ENCODE measurements at regions of chr6 and their contacts with region 1.

Region 1: GRCh38 chr6:27795697-27796494 is 116.3 kb downstream of the OR2B2 start:
- DNase-seq: peak; percentile 89
- ATAC-seq: peak; percentile 59
- H3K4me3 ChIP-seq: no peak overlapping the region
- H3K4me3 Mint-ChIP-seq: no peak overlapping the region
- H3K27ac ChIP-seq: no peak overlapping the region
- H3K27ac Mint-ChIP-seq: peak overlapping the region; percentile 17
- H3K4me1 ChIP-seq: peaks cover 19 to 25% of the 10 kb centered on the region in 2 donors
- H3K4me1 Mint-ChIP-seq: peaks cover 22% of the 10 kb centered on the region
- H3K27me3 ChIP-seq: peaks cover 0 to 10% (median 5%) of the 10 kb centered on the region in 4 experiments
- H3K27me3 Mint-ChIP-seq: peaks cover 12% of the 10 kb centered on the region
- CTCF ChIP-seq: peak; percentile 84

Region 2: DNA sequence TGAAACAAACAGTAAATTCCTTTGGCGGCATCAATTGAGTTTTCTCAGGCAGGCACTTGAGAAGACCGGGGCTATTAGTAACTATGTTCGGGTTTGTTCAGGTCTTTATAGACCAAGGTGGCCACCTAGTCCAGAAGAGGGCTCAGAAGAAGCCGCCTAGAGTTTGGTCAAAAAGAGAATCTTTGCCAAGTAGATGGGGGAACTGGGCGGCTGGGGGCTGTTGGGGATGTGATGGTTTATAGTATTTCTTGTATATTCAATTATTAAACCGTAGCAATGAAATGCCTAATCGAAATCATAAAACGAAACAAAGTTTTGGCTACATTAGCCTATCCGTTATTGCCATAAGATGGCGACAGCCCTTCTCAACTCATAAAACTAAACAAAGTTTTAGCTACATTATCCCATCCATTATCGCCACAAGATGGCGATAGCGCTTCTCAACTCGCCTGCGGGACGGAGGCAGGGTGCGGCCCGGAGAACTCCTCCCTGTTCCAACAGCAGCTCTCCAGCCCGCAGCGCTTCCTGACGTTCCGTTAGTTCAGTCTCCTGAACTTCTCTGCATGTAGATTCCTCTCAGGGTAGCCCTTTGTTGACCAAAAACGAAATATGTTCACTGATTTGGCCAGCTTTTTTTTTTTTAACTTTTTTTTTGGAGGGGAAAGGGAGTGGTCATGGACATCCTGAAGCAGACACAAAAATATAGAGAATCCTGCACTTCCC is 668.9 kb before region 1 on chr6:
- CTCF ChIA-PET with region 1: interaction called, 20 read pairs
- POLR2A ChIA-PET with region 1: no interaction called
- intact Hi-C with region 1: no loop called
- DNase-seq: peak; percentile 93
- ATAC-seq: peak; percentile 76
- H3K4me3 ChIP-seq: peak overlapping the region; percentile 5 to 56 (median 40)
- H3K4me3 Mint-ChIP-seq: peak overlapping the region; percentile 87
- H3K27ac ChIP-seq: peak overlapping the region in 1 of 2 donors; percentile 56
- H3K27ac Mint-ChIP-seq: peak overlapping the region; percentile 85
- H3K4me1 ChIP-seq: peaks cover 13 to 18% of the 10 kb centered on the region in 2 donors
- H3K4me1 Mint-ChIP-seq: peaks cover 20% of the 10 kb centered on the region
- H3K27me3 ChIP-seq: no peaks in the 10 kb centered on the region
- H3K27me3 Mint-ChIP-seq: no peaks in the 10 kb centered on the region
- CTCF ChIP-seq: peak; percentile 92

Region 3: DNA sequence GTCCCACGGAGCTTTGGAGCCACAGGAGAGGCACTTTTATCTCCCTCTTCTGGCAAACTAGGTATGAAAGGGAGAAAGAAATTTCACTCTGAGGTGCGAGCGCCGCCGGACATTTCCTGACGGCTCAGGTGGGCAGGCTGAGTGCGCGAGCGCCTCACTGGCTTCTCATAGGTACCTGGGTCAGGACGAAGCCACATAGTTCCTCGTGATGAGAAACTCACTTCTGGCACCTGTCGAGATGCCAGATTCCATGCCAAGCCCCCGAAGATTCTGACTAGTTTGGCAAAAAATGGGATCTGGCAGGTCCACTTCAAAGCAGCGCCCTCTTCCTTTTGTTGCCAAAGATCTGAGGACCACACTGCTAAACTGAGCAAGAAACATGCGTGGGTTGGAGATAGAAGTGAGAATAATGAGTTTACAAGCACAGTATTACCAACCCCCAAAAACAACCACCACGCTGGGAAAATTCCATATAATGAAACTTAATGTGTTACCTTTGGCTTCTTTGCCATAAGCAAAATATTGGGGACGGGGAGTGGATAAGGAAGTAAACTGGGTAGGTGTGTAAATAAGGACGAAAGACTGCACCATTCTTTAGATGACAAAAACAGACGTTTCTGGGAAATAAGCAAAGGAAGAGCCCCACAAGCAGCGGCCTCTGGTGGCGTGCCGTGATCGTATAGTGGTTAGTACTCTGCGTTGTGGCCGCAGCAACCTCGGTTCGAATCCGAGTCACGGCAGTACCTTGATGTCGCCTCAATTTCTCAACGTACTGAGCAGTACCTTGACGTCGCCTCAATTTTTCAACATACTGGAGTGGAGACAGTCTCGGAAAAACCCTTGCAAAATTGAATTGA is 638.2 kb before region 1 on chr6:
- CTCF ChIA-PET with region 1: interaction called, 8 read pairs
- POLR2A ChIA-PET with region 1: no interaction called
- intact Hi-C with region 1: loop called (anchors 1 kb)
- DNase-seq: peak; percentile 91
- ATAC-seq: peak; percentile 77
- H3K4me3 ChIP-seq: peak overlapping the region; percentile 59 to 91 (median 72)
- H3K4me3 Mint-ChIP-seq: peak overlapping the region; percentile 94
- H3K27ac ChIP-seq: peak overlapping the region; percentile 18 to 45
- H3K27ac Mint-ChIP-seq: peak overlapping the region; percentile 85
- H3K4me1 ChIP-seq: peaks cover 17 to 20% of the 10 kb centered on the region in 2 donors
- H3K4me1 Mint-ChIP-seq: peaks cover 25% of the 10 kb centered on the region
- H3K27me3 ChIP-seq: no peaks in the 10 kb centered on the region
- H3K27me3 Mint-ChIP-seq: no peaks in the 10 kb centered on the region
- CTCF ChIP-seq: peak; percentile 64

Region 4: GRCh38 chr6:27312146-27312949 is 483.5 kb before region 1 on chr6 and contains the start of gene POM121L2:
- CTCF ChIA-PET with region 1: interaction called, 10 read pairs
- POLR2A ChIA-PET with region 1: no interaction called
- intact Hi-C with region 1: no loop called
- DNase-seq: peak; percentile 82
- ATAC-seq: peak; percentile 60
- H3K4me3 ChIP-seq: peak within 1 kb of the TSS; percentile 5 to 69 (median 62)
- H3K4me3 Mint-ChIP-seq: peak within 1 kb of the TSS; percentile 88
- H3K27ac ChIP-seq: no peak within 1 kb of the TSS
- H3K27ac Mint-ChIP-seq: no peak within 1 kb of the TSS
- H3K4me1 ChIP-seq: peaks cover 12 to 13% of the 10 kb centered on the region in 2 donors
- H3K4me1 Mint-ChIP-seq: peaks cover 13% of the 10 kb centered on the region
- H3K27me3 ChIP-seq: peaks cover 0 to 56% (median 38%) of the 10 kb centered on the region in 4 experiments
- H3K27me3 Mint-ChIP-seq: peaks cover 70% of the 10 kb centered on the region
- CTCF ChIP-seq: peak; percentile 82
- total RNA-seq, gene POM121L2: not detected in 2 replicates

Region 5: GRCh38 chr6:27518881-27519795 is 276.8 kb before region 1 on chr6:
- CTCF ChIA-PET with region 1: interaction called, 15 read pairs
- POLR2A ChIA-PET with region 1: no interaction called
- intact Hi-C with region 1: no loop called
- DNase-seq: peak; percentile 87
- ATAC-seq: peak; percentile 67
- H3K4me3 ChIP-seq: peak overlapping the region; percentile 67 to 89 (median 76)
- H3K4me3 Mint-ChIP-seq: peak overlapping the region; percentile 85
- H3K27ac ChIP-seq: peak overlapping the region; percentile 52 to 69
- H3K27ac Mint-ChIP-seq: peak overlapping the region; percentile 70
- H3K4me1 ChIP-seq: peaks cover 8 to 19% of the 10 kb centered on the region in 2 donors
- H3K4me1 Mint-ChIP-seq: peaks cover 15% of the 10 kb centered on the region
- H3K27me3 ChIP-seq: peaks cover 0 to 18% (median 10%) of the 10 kb centered on the region in 4 experiments
- H3K27me3 Mint-ChIP-seq: peaks cover 22% of the 10 kb centered on the region
- CTCF ChIP-seq: peak; percentile 80

Region 6: GRCh38 chr6:27575594-27576361 is 220.1 kb before region 1 on chr6:
- CTCF ChIA-PET with region 1: no interaction called
- POLR2A ChIA-PET with region 1: no interaction called
- intact Hi-C with region 1: no loop called
- DNase-seq: no peak
- ATAC-seq: no peak
- H3K4me3 ChIP-seq: no peak overlapping the region
- H3K4me3 Mint-ChIP-seq: no peak overlapping the region
- H3K27ac ChIP-seq: no peak overlapping the region
- H3K27ac Mint-ChIP-seq: no peak overlapping the region
- H3K4me1 ChIP-seq: no peaks in the 10 kb centered on the region
- H3K4me1 Mint-ChIP-seq: no peaks in the 10 kb centered on the region
- H3K27me3 ChIP-seq: peaks cover 0 to 14% (median 8%) of the 10 kb centered on the region in 4 experiments
- H3K27me3 Mint-ChIP-seq: peaks cover 44% of the 10 kb centered on the region
- CTCF ChIP-seq: no peak

Region 7: GRCh38 chr6:27772261-27773001 is 23.5 kb before region 1 on chr6:
- CTCF ChIA-PET with region 1: interaction called, 43 read pairs
- POLR2A ChIA-PET with region 1: no interaction called
- intact Hi-C with region 1: no loop called
- DNase-seq: peak; percentile 87
- ATAC-seq: peak; percentile 88
- H3K4me3 ChIP-seq: no peak overlapping the region
- H3K4me3 Mint-ChIP-seq: peak overlapping the region; percentile 65
- H3K27ac ChIP-seq: peak overlapping the region in 1 of 2 donors; percentile 2
- H3K27ac Mint-ChIP-seq: peak overlapping the region; percentile 84
- H3K4me1 ChIP-seq: peaks cover 26 to 29% of the 10 kb centered on the region in 2 donors
- H3K4me1 Mint-ChIP-seq: peaks cover 36% of the 10 kb centered on the region
- H3K27me3 ChIP-seq: peaks cover 0 to 4% (median 2%) of the 10 kb centered on the region in 4 experiments
- H3K27me3 Mint-ChIP-seq: peaks cover 10% of the 10 kb centered on the region
- CTCF ChIP-seq: peak; percentile 93

Region 8: GRCh38 chr6:27864906-27865849 is 69.3 kb after region 1 on chr6:
- CTCF ChIA-PET with region 1: interaction called, 6 read pairs
- POLR2A ChIA-PET with region 1: interaction called, 12 read pairs
- intact Hi-C with region 1: no loop called
- DNase-seq: peak; percentile 97
- ATAC-seq: peak; percentile 80
- H3K4me3 ChIP-seq: peak overlapping the region; percentile 60 to 82 (median 69)
- H3K4me3 Mint-ChIP-seq: peak overlapping the region; percentile 97
- H3K27ac ChIP-seq: peak overlapping the region; percentile 81 to 83
- H3K27ac Mint-ChIP-seq: peak overlapping the region; percentile 97
- H3K4me1 ChIP-seq: peaks cover 13 to 35% of the 10 kb centered on the region in 2 donors
- H3K4me1 Mint-ChIP-seq: peaks cover 45% of the 10 kb centered on the region
- H3K27me3 ChIP-seq: no peaks in the 10 kb centered on the region
- H3K27me3 Mint-ChIP-seq: no peaks in the 10 kb centered on the region
- CTCF ChIP-seq: no peak

Region 9: DNA sequence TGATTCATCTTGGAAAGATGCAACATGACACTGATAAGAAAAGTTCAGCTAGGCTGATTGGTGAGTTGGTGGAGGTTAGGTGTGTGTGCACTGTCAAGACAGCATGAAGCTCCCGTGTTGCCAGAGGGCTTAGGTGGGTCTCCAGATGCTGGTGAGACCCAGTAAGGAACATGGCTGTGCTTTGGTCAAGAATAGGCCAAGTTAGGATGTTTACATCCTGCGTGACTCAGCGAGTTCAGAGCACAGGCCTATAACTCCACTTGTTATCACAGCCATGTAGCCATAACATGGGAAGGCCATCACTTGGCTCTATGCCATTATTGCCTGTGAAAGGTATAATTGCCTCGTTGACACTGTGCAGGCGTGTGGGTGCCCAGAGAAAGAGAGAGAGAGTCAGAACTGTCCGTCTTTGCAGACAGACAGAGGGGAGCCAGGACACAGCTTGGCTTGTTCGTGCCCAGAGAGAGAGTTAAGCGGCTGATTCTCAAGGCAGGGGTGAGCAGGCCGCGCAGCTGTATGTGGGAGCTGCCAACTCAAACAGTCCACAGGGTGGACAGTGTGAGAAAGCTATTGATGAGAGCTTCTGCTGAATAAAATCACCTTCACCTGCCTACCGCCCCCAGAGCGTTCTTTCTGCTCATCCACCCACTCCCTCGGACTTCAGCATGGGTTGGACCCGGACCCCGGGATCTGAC is 204.6 kb after region 1 on chr6:
- CTCF ChIA-PET with region 1: no interaction called
- POLR2A ChIA-PET with region 1: no interaction called
- intact Hi-C with region 1: no loop called
- DNase-seq: no peak
- ATAC-seq: no peak
- H3K4me3 ChIP-seq: no peak overlapping the region
- H3K4me3 Mint-ChIP-seq: no peak overlapping the region
- H3K27ac ChIP-seq: no peak overlapping the region
- H3K27ac Mint-ChIP-seq: no peak overlapping the region
- H3K4me1 ChIP-seq: no peaks in the 10 kb centered on the region
- H3K4me1 Mint-ChIP-seq: no peaks in the 10 kb centered on the region
- H3K27me3 ChIP-seq: no peaks in the 10 kb centered on the region
- H3K27me3 Mint-ChIP-seq: peaks cover 3% of the 10 kb centered on the region
- CTCF ChIP-seq: no peak

Measured in B cell (primary cell).